GM18951 (cell line): ENCODE measurements at regions of chr18 and their contacts with region 1.

Region 1: GRCh38 chr18:54119524-54120019 is 104.9 kb downstream of the MBD2 start:
- POLR2A ChIP-seq: no peak

Region 2: GRCh38 chr18:53567929-53568574 is 551.5 kb before region 1 on chr18:
- in situ Hi-C with region 1: loop called (anchors 25 kb)
- POLR2A ChIP-seq: no peak

Region 3: GRCh38 chr18:53698907-53699306 is 420.7 kb before region 1 on chr18:
- in situ Hi-C with region 1: loop called (anchors 25 kb)
- POLR2A ChIP-seq: no peak

Region 4: GRCh38 chr18:54636217-54636616 is 516.6 kb after region 1 on chr18:
- in situ Hi-C with region 1: no loop called
- POLR2A ChIP-seq: no peak